ENCODE measurements at regions of chr17 and their contacts with region 1.

Region 1: GRCh38 chr17:9575381-9576101 is at the start of gene STX8:
- DNase-seq: peak; percentile 91
- H3K4me3 ChIP-seq: peak within 1 kb of the TSS; percentile 96
- H3K27ac ChIP-seq: peak within 1 kb of the TSS; percentile 23
- H3K4me1 ChIP-seq: peaks cover 10% of the 10 kb centered on the region
- CTCF ChIP-seq: peak; percentile 51
- total RNA-seq, gene STX8: 69.0 and 88.1 TPM in 2 replicates

Region 2: DNA sequence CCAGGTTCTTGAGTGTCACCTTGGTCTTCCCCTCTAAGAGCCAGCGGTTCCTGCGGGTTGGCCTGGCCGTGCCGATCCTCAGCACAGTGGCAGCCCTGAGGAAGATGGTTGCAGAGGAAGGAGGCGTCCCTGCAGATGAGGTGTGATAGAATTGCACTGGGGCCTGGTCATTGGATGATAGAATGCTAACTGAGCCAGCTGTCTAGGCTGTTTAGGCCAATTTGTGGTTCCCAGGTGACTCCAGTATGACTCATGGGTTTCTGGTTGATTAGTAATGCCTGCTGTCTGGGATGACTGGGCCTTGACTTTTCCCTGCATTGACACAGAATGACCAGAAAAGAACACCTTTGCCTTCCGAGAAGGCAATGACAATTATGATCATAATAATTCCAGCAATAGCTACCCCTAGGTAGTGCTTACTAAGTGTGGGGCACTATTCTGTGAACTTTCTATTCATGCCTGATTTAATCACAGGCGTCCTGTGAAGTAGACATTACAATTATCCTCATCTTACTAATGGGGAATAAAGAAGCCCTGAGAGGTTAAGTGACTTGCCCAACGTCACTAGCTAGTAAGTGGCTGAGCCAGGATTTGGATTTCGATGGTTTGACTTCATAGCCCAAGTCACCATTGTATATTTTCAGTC is 101.3 kb after region 1 on chr17:
- CTCF ChIA-PET with region 1: no interaction called
- POLR2A ChIA-PET with region 1: no interaction called
- intact Hi-C with region 1: no loop called
- DNase-seq: no peak
- H3K4me3 ChIP-seq: no peak overlapping the region
- H3K27ac ChIP-seq: no peak overlapping the region
- H3K4me1 ChIP-seq: no peaks in the 10 kb centered on the region
- CTCF ChIP-seq: no peak

Region 3: DNA sequence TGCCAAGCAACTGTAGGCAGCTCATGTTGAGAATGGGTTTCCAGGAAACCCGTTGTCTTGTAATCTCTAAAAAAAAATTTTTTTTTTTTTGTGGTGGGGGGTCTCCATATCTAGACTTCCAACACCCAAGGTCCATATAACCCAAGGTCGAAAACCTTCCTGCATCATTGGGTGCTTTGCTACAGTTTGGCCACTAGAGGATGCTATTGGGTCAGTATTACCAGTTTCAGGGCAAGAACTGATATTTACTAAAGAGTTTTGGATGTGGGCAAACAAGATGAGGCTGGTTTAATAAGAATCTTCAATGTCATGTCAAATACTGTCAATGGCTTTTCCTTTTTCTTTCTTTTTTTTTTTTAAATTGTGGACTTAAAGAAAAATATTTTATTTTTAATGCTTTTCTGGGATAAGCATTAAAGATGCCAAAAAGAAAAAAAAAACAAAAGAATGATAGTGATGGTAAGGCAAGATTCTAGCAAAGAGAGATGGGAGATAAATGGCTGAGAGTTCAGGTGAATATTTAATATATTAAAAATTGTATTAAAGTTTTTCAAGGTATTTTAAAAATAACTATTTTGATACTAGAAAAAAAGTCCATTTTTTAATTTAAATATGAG is 153.6 kb after region 1 on chr17:
- CTCF ChIA-PET with region 1: no interaction called
- POLR2A ChIA-PET with region 1: no interaction called
- intact Hi-C with region 1: loop called (anchors 5 kb)
- DNase-seq: peak; percentile 56
- H3K4me3 ChIP-seq: no peak overlapping the region
- H3K27ac ChIP-seq: no peak overlapping the region
- H3K4me1 ChIP-seq: no peaks in the 10 kb centered on the region
- CTCF ChIP-seq: peak; percentile 98